T-cell (primary cell): ENCODE measurements at regions of chr5 and their contacts with region 1.

Region 1: GRCh38 chr5:172353241-172353812 is 69.8 kb upstream of the UBTD2 start:
- DNase-seq: no peak
- ATAC-seq: no peak
- H3K4me3 ChIP-seq: no peak overlapping the region
- H3K4me3 Mint-ChIP-seq: no peak overlapping the region
- H3K27ac ChIP-seq: no peak overlapping the region
- H3K27ac Mint-ChIP-seq: no peak overlapping the region
- H3K4me1 ChIP-seq: no peaks in the 10 kb centered on the region
- H3K4me1 Mint-ChIP-seq: no peaks in the 10 kb centered on the region
- H3K27me3 ChIP-seq: peaks cover 0 to 29% of the 10 kb centered on the region in 2 experiments
- H3K27me3 Mint-ChIP-seq: no peaks in the 10 kb centered on the region

Region 2: GRCh38 chr5:171630027-171630669 is 723.2 kb before region 1 on chr5:
- CTCF ChIA-PET with region 1: no interaction called
- POLR2A ChIA-PET with region 1: no interaction called
- DNase-seq: no peak
- ATAC-seq: no peak
- H3K4me3 ChIP-seq: no peak overlapping the region
- H3K4me3 Mint-ChIP-seq: no peak overlapping the region
- H3K27ac ChIP-seq: no peak overlapping the region
- H3K27ac Mint-ChIP-seq: no peak overlapping the region
- H3K4me1 ChIP-seq: no peaks in the 10 kb centered on the region
- H3K4me1 Mint-ChIP-seq: no peaks in the 10 kb centered on the region
- H3K27me3 ChIP-seq: peaks cover 0 to 27% of the 10 kb centered on the region in 2 experiments
- H3K27me3 Mint-ChIP-seq: peaks cover 21 to 31% of the 10 kb centered on the region in 2 donors

Region 3: GRCh38 chr5:172305380-172305779 is 47.9 kb before region 1 on chr5:
- CTCF ChIA-PET with region 1: no interaction called
- POLR2A ChIA-PET with region 1: interaction called in 1 of 2 experiments, 10 read pairs
- DNase-seq: no peak
- ATAC-seq: no peak
- H3K4me3 ChIP-seq: no peak overlapping the region
- H3K4me3 Mint-ChIP-seq: no peak overlapping the region
- H3K27ac ChIP-seq: no peak overlapping the region
- H3K27ac Mint-ChIP-seq: no peak overlapping the region
- H3K4me1 ChIP-seq: no peaks in the 10 kb centered on the region
- H3K4me1 Mint-ChIP-seq: no peaks in the 10 kb centered on the region
- H3K27me3 ChIP-seq: peaks cover 0 to 13% of the 10 kb centered on the region in 2 experiments
- H3K27me3 Mint-ChIP-seq: peaks cover 0 to 9% of the 10 kb centered on the region in 2 donors

Region 4: GRCh38 chr5:172395483-172395882 is 42.2 kb after region 1 on chr5:
- CTCF ChIA-PET with region 1: no interaction called
- POLR2A ChIA-PET with region 1: no interaction called
- DNase-seq: no peak
- ATAC-seq: no peak
- H3K4me3 ChIP-seq: no peak overlapping the region
- H3K4me3 Mint-ChIP-seq: no peak overlapping the region
- H3K27ac ChIP-seq: no peak overlapping the region
- H3K27ac Mint-ChIP-seq: no peak overlapping the region
- H3K4me1 ChIP-seq: no peaks in the 10 kb centered on the region
- H3K4me1 Mint-ChIP-seq: no peaks in the 10 kb centered on the region
- H3K27me3 ChIP-seq: peaks cover 0 to 11% of the 10 kb centered on the region in 2 experiments
- H3K27me3 Mint-ChIP-seq: peaks cover 7 to 27% of the 10 kb centered on the region in 2 donors